Prostate gland (tissue), 2 donors: ENCODE measurements at regions of chr5 and their contacts with region 1.

Region 1: DNA sequence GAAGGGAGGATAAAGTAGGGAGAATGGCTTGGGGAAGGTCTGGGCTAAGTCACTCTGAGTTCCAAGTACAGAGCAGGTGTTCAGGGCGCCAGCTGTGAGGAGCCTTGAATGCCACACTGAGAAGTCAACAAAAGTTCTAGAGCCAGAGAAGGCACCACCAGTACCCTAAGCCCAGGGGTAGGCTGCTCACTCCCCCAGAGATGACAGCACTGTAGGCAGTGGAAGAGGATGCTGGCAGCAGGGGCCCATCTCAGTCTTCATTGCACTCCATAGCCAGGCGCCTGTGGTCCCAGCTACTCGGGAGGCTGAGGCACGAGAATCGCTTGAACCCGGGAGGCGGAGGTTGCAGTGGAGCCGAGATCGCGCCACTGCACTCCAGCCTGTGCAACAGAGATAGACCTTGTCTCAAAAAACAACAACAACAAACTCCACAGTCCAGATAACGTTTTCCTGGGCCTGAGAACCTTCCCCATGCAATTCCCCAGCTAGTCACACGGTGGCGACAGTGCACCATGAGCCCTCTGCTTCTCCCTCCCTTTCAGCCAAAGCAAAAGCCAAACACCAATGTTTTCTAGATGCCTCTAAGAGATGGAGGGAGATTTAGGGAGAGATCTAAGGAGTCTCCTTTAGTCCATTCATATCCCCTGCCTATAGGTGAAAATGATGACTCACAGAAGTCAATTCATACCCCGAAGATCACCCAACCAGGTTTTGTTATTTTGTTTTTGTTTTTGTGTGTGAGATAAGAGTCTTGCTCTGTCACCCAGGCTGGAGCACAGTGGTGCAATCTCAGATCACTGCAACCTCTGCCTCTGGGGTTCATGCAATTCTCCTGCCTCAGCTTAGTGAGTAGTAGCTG is 19.8 kb upstream of the NSD1 start:
- DNase-seq: peak; percentile 59
- H3K4me3 ChIP-seq: no peak overlapping the region
- H3K27ac ChIP-seq: no peak overlapping the region
- H3K4me1 ChIP-seq: peaks cover 2% of the 10 kb centered on the region
- H3K27me3 ChIP-seq: no peaks in the 10 kb centered on the region
- CTCF ChIP-seq: peak; percentile 88 to 97 (median 93)
- POLR2A ChIP-seq: no peak

Region 2: GRCh38 chr5:176658007-176658599 is 455.7 kb before region 1 on chr5:
- intact Hi-C with region 1: loop called (anchors 5 kb)
- DNase-seq: peak; percentile 58
- H3K4me3 ChIP-seq: no peak overlapping the region
- H3K27ac ChIP-seq: no peak overlapping the region
- H3K4me1 ChIP-seq: no peaks in the 10 kb centered on the region
- H3K27me3 ChIP-seq: no peaks in the 10 kb centered on the region
- CTCF ChIP-seq: peak in 3 of 4 experiments; percentile 34 to 74 (median 61)
- POLR2A ChIP-seq: no peak

Region 3: GRCh38 chr5:177071666-177072385 is 42.0 kb before region 1 on chr5:
- intact Hi-C with region 1: loop called (anchors 2 kb)
- DNase-seq: peak; percentile 81
- H3K4me3 ChIP-seq: no peak overlapping the region
- H3K27ac ChIP-seq: no peak overlapping the region
- H3K4me1 ChIP-seq: no peaks in the 10 kb centered on the region
- H3K27me3 ChIP-seq: no peaks in the 10 kb centered on the region
- CTCF ChIP-seq: peak; percentile 59 to 83 (median 80)
- POLR2A ChIP-seq: no peak

Region 4: GRCh38 chr5:177311723-177312648 is 198.2 kb after region 1 on chr5 and contains the start of gene MXD3:
- intact Hi-C with region 1: loop called (anchors 5 kb)
- DNase-seq: peak; percentile 96
- H3K4me3 ChIP-seq: peak within 1 kb of the TSS; percentile 36 to 50
- H3K27ac ChIP-seq: no peak within 1 kb of the TSS
- H3K4me1 ChIP-seq: peaks cover 11% of the 10 kb centered on the region
- H3K27me3 ChIP-seq: no peaks in the 10 kb centered on the region
- CTCF ChIP-seq: peak in 1 of 4 experiments; percentile 8
- POLR2A ChIP-seq: no peak
- total RNA-seq, gene MXD3: 13.5 to 20.5 TPM